ENCODE measurements at regions of chr4 and their contacts with region 1.

Region 1: DNA sequence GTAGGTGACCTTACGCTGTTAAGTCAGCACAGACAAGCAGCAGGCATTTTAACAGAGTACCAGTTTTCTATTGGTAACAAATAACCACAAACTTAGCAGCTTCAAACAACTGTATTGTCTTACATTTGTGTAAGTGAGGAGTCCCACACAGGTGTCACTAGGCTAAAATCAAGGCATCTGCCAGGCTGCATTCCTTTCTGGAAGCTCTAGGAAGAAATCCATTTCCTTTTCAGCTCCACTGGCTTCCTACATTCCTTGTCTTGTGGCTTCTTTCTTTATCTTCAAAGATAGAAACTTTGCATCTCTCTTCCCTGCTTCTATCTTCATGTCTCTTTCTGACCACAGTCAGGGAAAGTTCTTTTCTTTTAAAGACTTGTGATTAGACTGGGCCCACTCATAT is 139.9 kb downstream of the TMEM144 start:
- DNase-seq: no peak
- H3K4me3 ChIP-seq: no peak overlapping the region
- H3K27ac ChIP-seq: no peak overlapping the region
- H3K4me1 ChIP-seq: no peaks in the 10 kb centered on the region
- H3K27me3 ChIP-seq: no peaks in the 10 kb centered on the region
- CTCF ChIP-seq: no peak

Region 2: GRCh38 chr4:158112622-158113021 is 237.5 kb before region 1 on chr4:
- CTCF ChIA-PET with region 1: no interaction called
- POLR2A ChIA-PET with region 1: interaction called, 10 read pairs
- intact Hi-C with region 1: no loop called
- DNase-seq: no peak
- H3K4me3 ChIP-seq: no peak overlapping the region
- H3K27ac ChIP-seq: no peak overlapping the region
- H3K4me1 ChIP-seq: no peaks in the 10 kb centered on the region
- H3K27me3 ChIP-seq: no peaks in the 10 kb centered on the region
- CTCF ChIP-seq: no peak

Region 3: GRCh38 chr4:158578476-158578875 is 228.3 kb after region 1 on chr4:
- CTCF ChIA-PET with region 1: no interaction called
- POLR2A ChIA-PET with region 1: no interaction called
- intact Hi-C with region 1: no loop called
- DNase-seq: no peak
- H3K4me3 ChIP-seq: no peak overlapping the region
- H3K27ac ChIP-seq: no peak overlapping the region
- H3K4me1 ChIP-seq: no peaks in the 10 kb centered on the region
- H3K27me3 ChIP-seq: no peaks in the 10 kb centered on the region
- CTCF ChIP-seq: 0 out of 2 replicates have a peak, but pooled peaks have one; percentile 31

Region 4: DNA sequence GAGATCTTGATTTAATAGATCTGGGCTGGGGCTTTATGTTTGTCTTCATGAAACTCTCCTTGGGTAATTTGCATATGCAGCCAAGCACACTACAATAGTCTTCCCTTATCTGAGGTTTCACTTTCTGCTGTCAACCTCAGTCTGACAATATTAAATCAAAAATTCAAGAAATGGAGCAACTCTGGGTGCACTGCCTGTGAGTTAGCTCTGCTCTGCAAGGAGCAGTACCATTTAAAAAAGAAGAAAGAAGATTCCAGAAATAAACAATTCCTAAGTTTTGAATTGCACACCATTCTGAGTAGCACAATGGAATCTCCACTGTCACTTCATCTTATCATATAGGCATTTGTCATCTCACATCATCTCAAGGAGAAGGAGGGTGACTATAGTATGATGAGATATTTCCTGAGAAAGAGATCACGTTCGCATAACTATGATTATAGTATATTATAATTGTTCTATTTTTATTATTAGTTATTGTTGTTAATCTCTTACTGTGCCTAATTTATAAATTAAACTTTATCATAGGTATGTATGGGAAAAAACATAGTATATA is 428.1 kb after region 1 on chr4:
- CTCF ChIA-PET with region 1: no interaction called
- POLR2A ChIA-PET with region 1: no interaction called
- intact Hi-C with region 1: no loop called
- DNase-seq: no peak
- H3K4me3 ChIP-seq: no peak overlapping the region
- H3K27ac ChIP-seq: no peak overlapping the region
- H3K4me1 ChIP-seq: no peaks in the 10 kb centered on the region
- H3K27me3 ChIP-seq: no peaks in the 10 kb centered on the region
- CTCF ChIP-seq: no peak